Heart right ventricle (tissue), 16 donors: ENCODE measurements at regions of chr6 and their contacts with region 1.

Region 1: DNA sequence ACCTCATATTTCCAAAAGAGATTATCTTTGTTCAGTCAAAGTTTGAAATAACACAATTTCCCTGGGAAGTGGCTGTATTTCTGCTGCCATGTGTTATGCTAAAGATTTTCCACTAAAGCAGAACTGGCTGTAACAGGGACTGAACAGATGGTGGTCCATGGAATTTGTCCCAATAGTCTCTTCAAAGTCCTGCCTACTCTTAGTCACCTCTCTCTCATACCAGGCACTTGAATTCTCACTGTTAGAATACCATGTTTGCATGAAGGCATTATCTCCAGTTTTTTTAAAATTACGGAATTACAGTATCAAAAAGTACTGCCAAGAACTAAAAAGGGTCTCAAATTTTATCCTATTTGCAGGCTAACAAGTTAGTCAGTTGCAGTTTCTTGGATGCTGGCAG is 105.0 kb upstream of the HDDC2 start:
- DNase-seq: no peak
- ATAC-seq: no peak
- H3K4me3 ChIP-seq: no peak overlapping the region
- H3K27ac ChIP-seq: no peak overlapping the region
- H3K4me1 ChIP-seq: no peaks in the 10 kb centered on the region
- H3K27me3 ChIP-seq: no peaks in the 10 kb centered on the region
- CTCF ChIP-seq: no peak

Region 2: DNA sequence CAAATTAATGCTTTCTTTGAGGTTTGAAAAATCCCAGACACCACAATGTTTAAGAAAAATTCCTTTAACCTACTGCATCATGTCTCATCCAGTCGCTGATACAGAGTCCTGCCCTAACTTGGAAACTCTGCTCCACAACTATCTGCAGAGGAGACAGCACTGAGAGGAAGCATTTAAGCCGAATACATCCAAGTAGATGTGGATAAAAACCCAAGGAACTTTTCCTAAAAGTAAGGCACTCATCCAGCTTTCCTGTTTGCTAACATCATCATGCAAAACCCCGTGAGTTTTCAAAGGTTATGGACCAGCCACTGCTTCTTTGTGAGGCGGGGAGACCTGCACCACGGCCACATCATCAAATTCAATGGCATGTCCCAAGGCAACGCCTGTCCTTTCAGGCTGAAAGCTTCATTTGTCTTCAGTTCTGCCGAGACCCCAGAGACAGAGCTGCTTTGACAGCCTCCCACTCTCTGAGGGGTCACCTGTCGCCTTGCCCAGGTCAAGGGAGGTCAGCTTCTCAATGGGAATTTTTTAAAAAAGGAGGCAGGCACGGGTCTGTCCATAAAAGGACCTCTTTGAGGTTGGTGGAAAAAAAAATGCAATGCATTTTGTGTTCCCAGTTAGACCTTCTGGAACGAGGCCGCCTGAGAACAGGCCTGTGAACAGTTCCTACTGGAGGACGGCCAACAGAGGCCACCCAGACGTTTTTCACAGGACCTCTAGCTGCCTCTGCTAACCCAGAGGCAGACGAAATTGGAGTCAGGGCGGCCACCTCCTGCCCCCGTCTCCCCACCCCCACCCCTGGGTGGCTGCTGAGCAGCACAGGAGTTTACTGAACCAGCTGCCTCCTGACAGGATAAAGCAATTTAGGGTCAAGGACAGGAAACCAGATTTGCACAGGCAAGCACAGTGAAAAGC is 37.5 kb after region 1 on chr6:
- intact Hi-C with region 1: loop called in 1 of 10 experiments (anchors 1 kb)
- DNase-seq: peak; percentile 67 to 82
- ATAC-seq: peak; percentile 81 to 95 (median 92)
- H3K4me3 ChIP-seq: peak overlapping the region in 1 of 10 donors; percentile 21
- H3K27ac ChIP-seq: peak overlapping the region in 9 of 10 donors; percentile 9 to 78 (median 65)
- H3K4me1 ChIP-seq: peaks cover 0 to 19% (median 4%) of the 10 kb centered on the region in 9 donors
- H3K27me3 ChIP-seq: no peaks in the 10 kb centered on the region
- CTCF ChIP-seq: no peak